MCF 10A (cell line): ENCODE measurements at regions of chr12 and their contacts with region 1.

Region 1: DNA sequence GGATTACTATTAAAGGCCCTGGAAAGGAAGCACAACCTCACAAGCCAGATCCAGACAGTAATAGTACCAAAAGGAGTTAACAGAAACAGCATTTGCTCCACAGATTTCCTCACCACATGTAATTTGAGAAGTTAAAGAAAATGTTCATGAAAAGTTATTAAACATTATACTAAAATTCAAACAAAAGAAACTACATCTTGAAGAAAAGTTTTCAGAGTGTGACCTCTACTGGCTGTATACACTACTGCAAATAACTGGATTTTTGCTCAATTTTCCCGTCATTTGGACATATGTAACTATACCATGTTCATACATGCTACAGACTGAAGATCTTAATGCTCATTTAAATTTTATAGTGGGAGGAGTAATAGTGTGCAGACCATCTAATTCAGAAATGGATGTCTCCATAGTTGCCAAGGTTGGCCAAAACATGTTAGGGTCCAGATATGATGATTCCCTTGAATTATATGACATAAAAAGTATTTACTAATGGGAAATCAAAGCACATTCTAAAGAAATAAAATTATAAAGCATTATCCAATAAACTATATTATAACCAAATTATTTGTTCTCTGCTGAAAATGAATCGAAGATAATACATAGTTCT is 5.6 kb downstream of the KRR1 start:
- DNase-seq: peak; percentile 40
- H3K4me3 Mint-ChIP-seq: no peak overlapping the region
- H3K27ac Mint-ChIP-seq: no peak overlapping the region
- H3K4me1 Mint-ChIP-seq: peaks cover 23% of the 10 kb centered on the region
- H3K27me3 Mint-ChIP-seq: no peaks in the 10 kb centered on the region
- CTCF ChIP-seq: peak; percentile 56

Region 2: DNA sequence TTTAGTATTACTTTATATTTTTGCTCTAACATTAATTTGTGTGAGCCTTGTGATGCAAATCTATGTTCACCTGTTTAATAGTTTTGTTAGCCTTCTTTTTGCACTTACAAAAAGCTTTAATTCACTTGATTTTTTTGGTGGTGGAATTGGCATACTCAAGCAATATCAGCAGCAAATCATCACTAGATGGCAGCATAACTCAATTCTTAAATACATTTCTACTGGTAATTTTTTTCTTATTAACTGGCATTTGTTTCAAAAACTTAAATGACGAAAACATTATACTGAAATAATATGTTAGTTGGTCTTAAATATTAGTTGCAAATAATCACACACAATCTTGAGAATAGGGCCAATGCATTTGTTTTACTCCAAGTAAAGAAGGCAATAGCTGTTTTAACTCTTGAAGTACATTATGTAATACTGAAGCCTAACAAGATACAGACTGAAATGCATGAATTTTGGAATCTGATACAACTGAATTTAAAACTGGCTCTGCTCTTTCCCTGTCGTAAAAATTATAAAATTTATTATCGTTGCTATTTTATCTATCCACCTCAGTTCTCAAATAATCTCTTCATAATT is 816.6 kb before region 1 on chr12:
- CTCF ChIA-PET with region 1: interaction called, 5 read pairs
- POLR2A ChIA-PET with region 1: no interaction called
- intact Hi-C with region 1: loop called (anchors 1 kb)
- DNase-seq: peak; percentile 59
- H3K4me3 Mint-ChIP-seq: no peak overlapping the region
- H3K27ac Mint-ChIP-seq: no peak overlapping the region
- H3K4me1 Mint-ChIP-seq: no peaks in the 10 kb centered on the region
- H3K27me3 Mint-ChIP-seq: no peaks in the 10 kb centered on the region
- CTCF ChIP-seq: peak; percentile 59

Region 3: GRCh38 chr12:74801625-74802024 is 704.2 kb before region 1 on chr12:
- CTCF ChIA-PET with region 1: interaction called, 4 read pairs
- POLR2A ChIA-PET with region 1: no interaction called
- intact Hi-C with region 1: loop called (anchors 10 kb)
- DNase-seq: peak; percentile 54
- H3K4me3 Mint-ChIP-seq: no peak overlapping the region
- H3K27ac Mint-ChIP-seq: no peak overlapping the region
- H3K4me1 Mint-ChIP-seq: no peaks in the 10 kb centered on the region
- H3K27me3 Mint-ChIP-seq: no peaks in the 10 kb centered on the region
- CTCF ChIP-seq: no peak

Region 4: DNA sequence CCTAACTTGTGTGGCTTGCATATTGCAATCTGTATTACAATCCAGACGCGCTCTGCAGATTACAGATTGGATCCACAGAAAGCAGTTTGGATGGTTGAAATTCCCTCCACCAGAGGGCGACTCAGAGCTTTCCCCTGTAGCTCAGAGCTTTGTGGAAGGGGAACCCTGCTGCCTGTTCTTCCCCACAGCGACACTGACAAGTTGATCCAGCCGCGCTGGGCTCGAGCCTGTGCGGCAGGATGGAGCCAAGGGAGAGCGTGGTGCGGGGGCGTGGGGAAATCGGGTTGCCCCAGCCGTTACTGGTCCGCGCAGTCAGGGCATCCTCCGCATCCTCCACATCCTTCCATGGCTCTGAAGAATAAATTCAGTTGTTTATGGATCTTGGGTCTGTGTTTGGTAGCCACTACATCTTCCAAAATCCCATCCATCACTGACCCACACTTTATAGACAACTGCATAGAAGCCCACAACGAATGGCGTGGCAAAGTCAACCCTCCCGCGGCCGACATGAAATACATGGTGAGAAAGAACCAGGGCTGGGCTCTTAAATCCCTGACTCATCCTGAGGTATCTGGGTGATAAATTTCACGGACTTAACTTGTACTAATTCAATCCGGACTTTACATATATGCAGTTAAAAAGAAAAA is 171.3 kb before region 1 on chr12 and contains the start of gene GLIPR1L1:
- CTCF ChIA-PET with region 1: interaction called, 18 read pairs
- POLR2A ChIA-PET with region 1: interaction called, 7 read pairs
- intact Hi-C with region 1: loop called (anchors 1 kb)
- DNase-seq: peak; percentile 88
- H3K4me3 Mint-ChIP-seq: peak within 1 kb of the TSS; percentile 77
- H3K27ac Mint-ChIP-seq: peak within 1 kb of the TSS; percentile 33
- H3K4me1 Mint-ChIP-seq: peaks cover 8% of the 10 kb centered on the region
- H3K27me3 Mint-ChIP-seq: no peaks in the 10 kb centered on the region
- CTCF ChIP-seq: peak; percentile 91
- total RNA-seq, gene GLIPR1L1: not detected in 2 replicates

Region 5: GRCh38 chr12:75390899-75391538 is 114.8 kb before region 1 on chr12 and contains the start of gene GLIPR1L2:
- CTCF ChIA-PET with region 1: interaction called, 25 read pairs
- POLR2A ChIA-PET with region 1: interaction called, 41 read pairs
- intact Hi-C with region 1: loop called (anchors 2 kb)
- DNase-seq: peak; percentile 98
- H3K4me3 Mint-ChIP-seq: peak within 1 kb of the TSS; percentile 91
- H3K27ac Mint-ChIP-seq: peak within 1 kb of the TSS; percentile 99
- H3K4me1 Mint-ChIP-seq: peaks cover 28% of the 10 kb centered on the region
- H3K27me3 Mint-ChIP-seq: no peaks in the 10 kb centered on the region
- CTCF ChIP-seq: peak; percentile 85
- total RNA-seq, gene GLIPR1L2: 0.23 TPM in 1 of 2 replicates, not detected in the other

Region 6: GRCh38 chr12:75419841-75420240 is 86.0 kb before region 1 on chr12:
- CTCF ChIA-PET with region 1: no interaction called
- POLR2A ChIA-PET with region 1: no interaction called
- intact Hi-C with region 1: no loop called
- DNase-seq: no peak
- H3K4me3 Mint-ChIP-seq: no peak overlapping the region
- H3K27ac Mint-ChIP-seq: no peak overlapping the region
- H3K4me1 Mint-ChIP-seq: no peaks in the 10 kb centered on the region
- H3K27me3 Mint-ChIP-seq: no peaks in the 10 kb centered on the region
- CTCF ChIP-seq: no peak

Region 7: DNA sequence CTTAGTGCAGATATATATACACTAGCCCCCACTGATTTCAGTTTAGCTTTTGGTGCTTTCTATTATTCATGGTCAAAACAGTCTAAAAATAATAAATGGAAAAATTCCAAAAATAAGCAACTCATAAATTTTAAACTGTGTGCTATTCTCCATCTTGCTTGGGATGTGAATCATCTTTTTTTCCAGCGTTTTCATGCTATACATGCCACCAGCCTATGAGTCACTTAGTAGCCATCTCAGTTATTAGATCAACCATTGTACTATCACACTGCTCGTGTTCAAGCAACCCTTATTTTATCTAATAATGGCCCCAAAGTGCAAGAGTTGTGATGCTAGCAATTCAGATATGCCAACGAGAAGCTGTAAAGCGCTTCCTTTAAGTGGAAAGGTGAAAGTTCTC is 79.5 kb after region 1 on chr12:
- CTCF ChIA-PET with region 1: no interaction called
- POLR2A ChIA-PET with region 1: no interaction called
- intact Hi-C with region 1: no loop called
- DNase-seq: peak; percentile 54
- H3K4me3 Mint-ChIP-seq: no peak overlapping the region
- H3K27ac Mint-ChIP-seq: no peak overlapping the region
- H3K4me1 Mint-ChIP-seq: no peaks in the 10 kb centered on the region
- H3K27me3 Mint-ChIP-seq: no peaks in the 10 kb centered on the region
- CTCF ChIP-seq: no peak

Region 8: GRCh38 chr12:75781532-75782046 is 275.8 kb after region 1 on chr12:
- CTCF ChIA-PET with region 1: no interaction called
- POLR2A ChIA-PET with region 1: no interaction called
- intact Hi-C with region 1: no loop called
- DNase-seq: peak; percentile 30
- H3K4me3 Mint-ChIP-seq: no peak overlapping the region
- H3K27ac Mint-ChIP-seq: no peak overlapping the region
- H3K4me1 Mint-ChIP-seq: peaks cover 31% of the 10 kb centered on the region
- H3K27me3 Mint-ChIP-seq: no peaks in the 10 kb centered on the region
- CTCF ChIP-seq: no peak